GM12878 (cell line): ENCODE measurements at regions of chr6 and their contacts with region 1.

Region 1: GRCh38 chr6:43990627-43991619 is 136.3 kb downstream of the MRPL14 start:
- DNase-seq: no peak
- ATAC-seq: no peak
- H3K4me3 ChIP-seq: no peak overlapping the region
- H3K27ac ChIP-seq: no peak overlapping the region
- H3K4me1 ChIP-seq: peaks cover 10% of the 10 kb centered on the region
- H3K27me3 ChIP-seq: no peaks in the 10 kb centered on the region
- CTCF ChIP-seq: no peak
- EP300 ChIP-seq: no peak
- POLR2A ChIP-seq: no peak
- RAD21 ChIP-seq: no peak

Region 2: GRCh38 chr6:43964659-43965570 is 26.0 kb before region 1 on chr6:
- CTCF ChIA-PET with region 1: no interaction called
- POLR2A ChIA-PET with region 1: interaction called, 12 read pairs
- RAD21 ChIA-PET with region 1: interaction called, 3 read pairs
- SMC1A ChIA-PET with region 1: no interaction called
- in situ Hi-C with region 1: no loop called
- intact Hi-C with region 1: no loop called
- DNase-seq: no peak
- ATAC-seq: no peak
- H3K4me3 ChIP-seq: no peak overlapping the region
- H3K27ac ChIP-seq: no peak overlapping the region
- H3K4me1 ChIP-seq: no peaks in the 10 kb centered on the region
- H3K27me3 ChIP-seq: no peaks in the 10 kb centered on the region; a peak in 1 of 4 replicates
- CTCF ChIP-seq: no peak
- EP300 ChIP-seq: no peak
- POLR2A ChIP-seq: no peak
- RAD21 ChIP-seq: no peak

Region 3: GRCh38 chr6:43977404-43978111 is 13.4 kb before region 1 on chr6:
- CTCF ChIA-PET with region 1: interaction called, 6 read pairs
- POLR2A ChIA-PET with region 1: interaction called, 41 read pairs
- RAD21 ChIA-PET with region 1: interaction called, 48 read pairs
- SMC1A ChIA-PET with region 1: interaction called, 41 read pairs
- in situ Hi-C with region 1: no loop called
- intact Hi-C with region 1: no loop called
- DNase-seq: peak; percentile 91
- ATAC-seq: peak; percentile 95
- H3K4me3 ChIP-seq: no peak overlapping the region
- H3K27ac ChIP-seq: peak overlapping the region; percentile 45
- H3K4me1 ChIP-seq: peaks cover 18% of the 10 kb centered on the region
- H3K27me3 ChIP-seq: no peaks in the 10 kb centered on the region
- CTCF ChIP-seq: peak; percentile 26 to 50 (median 50); a peak in 5 of 6 replicates
- EP300 ChIP-seq: peak; percentile 89 to 94
- POLR2A ChIP-seq: no peak
- RAD21 ChIP-seq: peak; percentile 44

Region 4: GRCh38 chr6:44456070-44456965 is 465.4 kb after region 1 on chr6:
- CTCF ChIA-PET with region 1: no interaction called
- POLR2A ChIA-PET with region 1: no interaction called
- RAD21 ChIA-PET with region 1: no interaction called
- SMC1A ChIA-PET with region 1: no interaction called
- in situ Hi-C with region 1: no loop called
- intact Hi-C with region 1: no loop called
- DNase-seq: no peak
- ATAC-seq: peak; percentile 95
- H3K4me3 ChIP-seq: no peak overlapping the region
- H3K27ac ChIP-seq: no peak overlapping the region
- H3K4me1 ChIP-seq: no peaks in the 10 kb centered on the region
- H3K27me3 ChIP-seq: no peaks in the 10 kb centered on the region
- CTCF ChIP-seq: peak; percentile 75 to 79 (median 76)
- EP300 ChIP-seq: no peak
- POLR2A ChIP-seq: no peak
- RAD21 ChIP-seq: peak; percentile 72